ENCODE measurements at regions of chr6 and their contacts with region 1.

Region 1: DNA sequence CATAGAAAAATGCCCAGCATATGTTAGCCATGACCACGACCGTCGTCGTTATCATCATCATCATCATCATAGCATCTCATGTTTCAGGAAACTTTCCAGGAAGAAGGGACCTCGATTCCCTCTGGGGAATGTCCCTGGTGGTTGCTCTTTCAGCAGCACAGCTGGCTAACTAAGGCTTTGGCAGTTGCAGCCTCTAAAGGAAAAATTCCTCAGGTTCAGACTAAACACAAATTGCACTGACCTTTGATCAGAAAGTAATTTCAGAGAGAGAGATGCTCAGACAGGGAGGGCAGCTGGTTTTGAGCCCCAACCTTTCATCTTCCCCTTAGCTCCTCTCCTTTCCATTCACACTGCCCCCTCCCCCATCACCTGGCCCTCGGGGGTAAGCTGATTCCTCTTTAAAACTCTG is 5.6 kb upstream of the CFB start:
- DNase-seq: no peak
- CTCF ChIP-seq: no peak

Region 2: DNA sequence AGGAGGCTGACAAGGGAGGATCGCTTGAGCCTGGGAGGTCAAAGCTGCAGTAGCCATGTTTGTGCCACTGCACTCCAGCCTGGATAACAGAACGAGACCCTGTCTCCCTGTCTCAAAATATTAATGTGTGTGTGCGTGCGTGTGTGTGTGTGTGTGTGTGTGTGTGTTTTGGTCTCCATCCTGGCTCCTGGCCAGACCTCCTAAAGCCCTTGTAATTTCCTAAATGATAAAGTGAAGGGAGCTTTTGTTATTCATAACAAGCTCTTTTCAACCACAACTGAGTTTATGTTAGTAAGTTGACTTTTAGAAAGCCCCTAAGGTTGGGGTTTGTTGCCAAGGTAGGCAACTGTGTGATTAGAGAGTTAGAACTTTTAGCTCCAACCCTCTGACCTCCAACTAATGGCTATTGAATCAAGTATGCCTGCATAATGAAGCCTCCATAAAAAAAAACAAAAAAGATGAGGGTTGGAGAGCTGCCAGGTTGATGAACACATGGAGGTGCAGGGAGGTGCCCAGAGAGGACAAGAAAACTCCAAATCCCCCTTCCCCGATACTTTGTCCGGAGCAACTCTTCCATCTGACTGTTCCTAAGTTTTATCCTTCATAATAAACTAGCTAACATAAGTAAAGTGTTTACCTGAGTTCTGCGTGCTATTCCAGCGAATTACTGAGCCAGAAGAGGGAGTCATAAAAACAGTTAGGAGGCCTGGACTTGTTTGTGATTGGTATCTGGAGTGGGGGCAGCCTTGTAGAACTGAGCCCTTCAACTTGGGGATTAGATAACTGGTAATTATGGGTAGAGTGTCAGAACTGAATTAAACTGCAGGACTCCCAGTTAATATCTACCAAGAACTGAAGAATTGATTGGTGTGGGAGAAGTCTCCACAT is 330.5 kb before region 1 on chr6:
- CTCF ChIA-PET with region 1: no interaction called
- POLR2A ChIA-PET with region 1: no interaction called
- DNase-seq: no peak
- CTCF ChIP-seq: no peak

Region 3: DNA sequence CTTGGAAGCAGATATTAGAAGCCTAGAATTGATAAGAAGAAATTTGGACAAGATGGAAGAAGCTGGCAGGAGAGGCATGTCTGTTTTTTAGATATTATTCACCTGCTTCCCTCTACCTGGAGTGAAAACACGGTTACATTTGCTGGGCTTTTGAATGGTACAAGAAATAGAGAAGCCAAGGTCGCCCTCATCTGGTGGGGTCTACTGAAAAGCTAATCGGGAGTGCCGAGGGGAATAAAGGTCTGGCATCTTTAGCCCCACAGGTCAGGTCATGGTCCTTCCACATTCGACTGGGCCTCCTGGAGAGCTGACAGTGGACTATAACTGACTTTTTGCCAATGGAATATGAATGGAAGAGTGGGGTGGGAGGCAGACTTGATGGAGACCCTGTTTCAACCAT is 17.3 kb before region 1 on chr6:
- CTCF ChIA-PET with region 1: interaction called, 10 read pairs
- POLR2A ChIA-PET with region 1: no interaction called
- DNase-seq: no peak
- CTCF ChIP-seq: peak; percentile 55

Region 4: GRCh38 chr6:31952140-31952805 is 12.0 kb after region 1 on chr6:
- CTCF ChIA-PET with region 1: interaction called, 35 read pairs
- POLR2A ChIA-PET with region 1: interaction called, 3 read pairs
- DNase-seq: peak; percentile 46
- CTCF ChIP-seq: peak; percentile 70

Region 5: GRCh38 chr6:32290886-32291450 is 350.7 kb after region 1 on chr6:
- CTCF ChIA-PET with region 1: no interaction called
- POLR2A ChIA-PET with region 1: no interaction called
- DNase-seq: no peak
- CTCF ChIP-seq: no peak